Adrenal gland (tissue), 19 donors: ENCODE measurements at regions of chr4 and their contacts with region 1.

Region 1: GRCh38 chr4:110005461-110006056 is 92.9 kb downstream of the EGF start:
- DNase-seq: no peak
- H3K4me3 ChIP-seq: no peak overlapping the region
- H3K27ac ChIP-seq: no peak overlapping the region
- H3K4me1 ChIP-seq: no peaks in the 10 kb centered on the region
- H3K27me3 ChIP-seq: peaks cover 3% of the 10 kb centered on the region
- CTCF ChIP-seq: peak; percentile 63 to 87 (median 76)
- POLR2A ChIP-seq: no peak

Region 2: GRCh38 chr4:110211007-110211769 is 205.6 kb after region 1 on chr4:
- intact Hi-C with region 1: loop called in 1 of 2 experiments (anchors 10 kb)
- DNase-seq: peak; percentile 24 to 65 (median 40)
- H3K4me3 ChIP-seq: no peak overlapping the region
- H3K27ac ChIP-seq: no peak overlapping the region
- H3K4me1 ChIP-seq: no peaks in the 10 kb centered on the region
- H3K27me3 ChIP-seq: no peaks in the 10 kb centered on the region
- CTCF ChIP-seq: peak; percentile 66 to 88 (median 74)
- POLR2A ChIP-seq: no peak

Region 3: GRCh38 chr4:110516106-110516922 is 510.8 kb after region 1 on chr4:
- intact Hi-C with region 1: loop called (anchors 2 to 5 kb)
- DNase-seq: peak; percentile 78 to 91 (median 86)
- H3K4me3 ChIP-seq: peak overlapping the region in 2 of 4 donors; percentile 44 to 62
- H3K27ac ChIP-seq: peak overlapping the region in 3 of 5 donors; percentile 58 to 70 (median 64)
- H3K4me1 ChIP-seq: peaks cover 0 to 8% of the 10 kb centered on the region in 2 donors
- H3K27me3 ChIP-seq: no peaks in the 10 kb centered on the region
- CTCF ChIP-seq: peak; percentile 72 to 82 (median 76)
- POLR2A ChIP-seq: no peak